Posterior cingulate gyrus (tissue), 11 donors: ENCODE measurements at regions of chr14 and their contacts with region 1.

Region 1: DNA sequence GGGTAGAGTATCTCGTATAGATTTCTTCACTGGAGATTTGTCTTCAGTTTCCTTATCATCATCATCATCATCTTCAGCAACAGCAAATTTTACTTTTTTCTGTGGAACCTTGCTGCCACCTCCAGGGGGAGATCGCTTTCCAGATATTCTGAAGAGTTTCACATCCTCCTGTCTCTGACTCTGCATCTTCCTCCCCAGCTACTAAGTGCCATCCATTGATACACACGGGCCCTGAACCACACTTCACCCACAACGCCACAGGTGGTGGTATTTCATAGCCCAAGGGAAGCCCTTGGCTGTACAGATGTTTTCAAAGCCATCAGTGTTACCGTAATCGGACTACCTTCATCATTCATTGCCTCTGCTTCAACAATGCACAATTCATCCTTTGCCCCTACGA is 82.2 kb downstream of the PPP2R5C start:
- DNase-seq: no peak

Region 2: GRCh38 chr14:101774006-101774795 is 69.5 kb before region 1 on chr14:
- intact Hi-C with region 1: loop called (anchors 10 kb)
- DNase-seq: peak in 3 of 10 donors; percentile 46 to 88 (median 50)

Region 3: DNA sequence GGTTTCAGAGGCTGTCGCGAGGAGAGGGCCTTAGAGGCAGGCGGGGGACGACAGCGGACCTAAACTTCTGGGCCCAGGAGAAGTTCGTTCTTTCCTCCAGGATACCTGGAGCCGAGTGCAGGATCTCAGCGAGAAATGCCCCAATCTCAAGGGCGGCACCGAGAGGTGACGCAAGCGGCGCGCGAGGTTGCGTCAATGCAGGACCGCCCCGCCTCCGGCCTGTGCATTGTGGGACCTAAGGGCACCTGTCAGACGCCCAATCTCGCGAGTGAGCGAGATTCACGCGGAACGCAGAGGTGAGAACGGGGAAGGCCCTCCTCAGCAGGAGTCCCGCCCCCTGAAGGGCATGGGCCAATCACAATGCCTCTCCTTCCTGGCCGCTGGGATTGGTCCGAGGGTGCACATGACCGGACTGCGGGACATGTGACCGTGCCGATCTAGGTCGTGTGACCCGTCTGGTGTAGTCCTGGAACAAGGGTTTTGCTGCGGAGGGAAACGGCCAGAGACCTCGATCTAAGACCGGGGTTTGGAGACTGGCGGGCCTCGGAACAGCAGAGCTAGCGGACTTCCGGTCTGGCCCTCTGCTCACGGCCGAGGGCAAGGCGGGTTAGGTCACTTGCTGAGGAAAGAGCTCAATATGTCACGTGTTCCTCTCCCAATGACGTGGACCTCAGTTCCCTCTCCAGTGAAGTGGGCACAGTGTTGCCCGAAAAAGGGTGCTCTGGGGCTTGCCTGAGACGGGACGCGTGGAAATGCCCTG is 104.4 kb after region 1 on chr14:
- intact Hi-C with region 1: no loop called
- DNase-seq: peak; percentile 97 to 100 (median 100)